Mammary epithelial cell (primary cell): ENCODE measurements at regions of chr9 and their contacts with region 1.

Region 1: DNA sequence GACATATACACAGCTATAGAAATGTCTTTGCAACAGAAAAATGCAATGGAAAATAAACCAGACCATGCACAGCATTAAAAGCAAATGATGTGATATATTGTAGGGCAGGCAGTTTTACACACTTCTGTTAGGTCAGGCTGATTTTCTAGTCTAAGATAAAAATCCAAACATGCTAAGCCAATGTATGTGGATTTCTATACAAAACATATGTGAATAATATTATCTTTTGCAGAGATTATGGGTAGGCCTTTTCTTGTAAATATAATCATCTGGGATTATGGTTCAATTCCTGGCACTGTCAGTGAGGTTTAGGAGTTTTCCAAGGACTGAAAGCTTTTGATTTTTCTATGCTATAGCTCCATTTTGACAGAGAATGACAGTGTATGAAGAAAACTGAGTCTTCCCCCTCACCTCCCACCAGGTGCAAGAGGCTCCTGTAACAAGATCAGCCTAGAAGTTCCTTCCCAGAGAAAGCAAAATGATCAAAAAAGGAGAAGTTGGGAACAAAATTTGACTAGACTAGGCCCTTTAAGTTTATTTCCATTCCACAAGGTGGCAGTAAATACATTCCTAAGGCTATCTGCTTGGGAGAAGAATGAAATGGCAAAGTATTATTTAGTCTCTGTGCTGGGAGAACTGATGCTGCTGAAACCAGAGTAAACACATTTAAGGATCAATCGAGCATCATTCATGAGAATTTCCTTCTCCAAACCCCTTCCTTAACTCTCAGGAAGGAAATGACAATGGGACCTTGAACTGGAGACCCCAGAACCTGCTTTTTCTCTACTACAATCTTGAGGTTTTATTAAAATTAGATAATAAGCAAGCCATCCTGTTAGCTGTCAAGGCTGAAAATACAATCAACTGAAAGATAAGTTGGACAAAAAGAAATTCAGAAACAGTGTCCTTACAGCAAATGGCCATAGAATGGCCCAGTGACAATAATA is 133.0 kb upstream of the TUT7 start:
- DNase-seq: peak; percentile 40
- H3K4me3 ChIP-seq: no peak overlapping the region
- H3K27ac ChIP-seq: no peak overlapping the region
- H3K4me1 ChIP-seq: peaks cover 8% of the 10 kb centered on the region
- H3K27me3 ChIP-seq: no peaks in the 10 kb centered on the region
- CTCF ChIP-seq: peak; percentile 31 to 69

Region 2: GRCh38 chr9:86413966-86414880 is 72.9 kb before region 1 on chr9:
- CTCF ChIA-PET with region 1: no interaction called
- dilution Hi-C with region 1: no loop called
- in situ Hi-C with region 1: no loop called
- intact Hi-C with region 1: loop called (anchors 5 kb)
- DNase-seq: no peak
- H3K4me3 ChIP-seq: no peak overlapping the region
- H3K27ac ChIP-seq: no peak overlapping the region
- H3K4me1 ChIP-seq: no peaks in the 10 kb centered on the region
- H3K27me3 ChIP-seq: no peaks in the 10 kb centered on the region
- CTCF ChIP-seq: peak; percentile 59 to 61

Region 3: DNA sequence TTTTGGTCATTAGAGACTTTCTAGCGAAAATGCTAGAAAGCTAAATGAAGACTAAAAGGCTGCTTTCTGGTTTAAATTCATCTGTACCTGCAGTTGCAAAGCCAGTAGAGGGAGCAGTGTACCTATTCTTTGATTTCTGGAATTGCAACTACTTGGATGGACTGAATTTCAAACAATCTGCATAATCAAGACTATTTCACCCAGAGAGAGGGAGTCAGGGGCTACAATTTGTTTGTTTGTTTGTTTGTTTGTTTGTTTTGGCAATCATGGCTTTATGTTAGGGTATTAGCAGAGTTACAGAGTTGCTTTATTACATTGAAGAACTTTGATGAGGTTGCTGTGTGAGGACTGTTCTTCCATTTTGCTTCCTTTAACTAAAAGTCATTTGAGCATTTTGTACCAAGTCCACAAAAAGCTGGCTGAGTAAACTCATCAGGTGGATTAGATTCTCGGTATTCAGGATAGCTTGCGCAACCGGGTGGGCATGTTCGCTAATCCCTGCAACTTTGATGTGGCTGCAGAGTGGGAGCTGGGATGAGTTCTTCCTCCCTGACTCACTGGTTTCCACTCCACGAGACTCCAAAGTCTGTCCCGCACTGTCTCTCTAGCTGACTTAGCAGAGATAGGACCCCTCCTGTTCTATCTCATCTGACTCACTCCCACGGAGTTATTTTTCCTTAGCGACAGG is 53.0 kb before region 1 on chr9:
- CTCF ChIA-PET with region 1: no interaction called
- dilution Hi-C with region 1: no loop called
- in situ Hi-C with region 1: loop called in 1 of 2 experiments (anchors 10 kb)
- intact Hi-C with region 1: loop called (anchors 2 kb)
- DNase-seq: peak; percentile 35
- H3K4me3 ChIP-seq: no peak overlapping the region
- H3K27ac ChIP-seq: no peak overlapping the region
- H3K4me1 ChIP-seq: peaks cover 8% of the 10 kb centered on the region
- H3K27me3 ChIP-seq: no peaks in the 10 kb centered on the region
- CTCF ChIP-seq: peak; percentile 82 to 84

Region 4: DNA sequence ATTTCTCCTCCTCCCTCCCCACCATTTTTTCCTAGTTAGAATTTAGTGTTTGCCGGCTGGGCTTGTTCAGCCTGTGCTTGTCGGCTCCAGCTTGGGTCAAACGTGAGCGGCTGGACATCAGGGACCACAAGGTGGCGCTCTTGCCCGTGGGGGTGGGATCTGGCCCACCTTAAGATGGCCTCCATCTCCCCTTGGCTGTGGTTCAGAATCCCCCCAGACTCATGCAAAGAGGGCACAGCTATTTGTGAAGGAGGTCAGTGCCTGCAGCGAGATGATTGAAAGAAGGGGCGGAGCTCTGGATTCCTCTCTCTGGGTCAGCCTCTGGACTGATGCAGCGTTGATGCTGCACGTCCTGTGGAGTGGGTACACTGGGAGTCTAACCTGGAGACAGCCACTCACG is 150.4 kb after region 1 on chr9:
- CTCF ChIA-PET with region 1: no interaction called
- dilution Hi-C with region 1: no loop called
- in situ Hi-C with region 1: no loop called
- intact Hi-C with region 1: loop called (anchors 1 kb)
- DNase-seq: no peak
- H3K4me3 ChIP-seq: no peak overlapping the region
- H3K27ac ChIP-seq: no peak overlapping the region
- H3K4me1 ChIP-seq: no peaks in the 10 kb centered on the region
- H3K27me3 ChIP-seq: no peaks in the 10 kb centered on the region
- CTCF ChIP-seq: peak; percentile 34 to 83

Region 5: GRCh38 chr9:87662808-87663528 is 1175.8 kb after region 1 on chr9:
- CTCF ChIA-PET with region 1: no interaction called
- dilution Hi-C with region 1: no loop called
- in situ Hi-C with region 1: no loop called
- intact Hi-C with region 1: loop called (anchors 5 kb)
- DNase-seq: peak; percentile 78
- H3K4me3 ChIP-seq: no peak overlapping the region
- H3K27ac ChIP-seq: no peak overlapping the region
- H3K4me1 ChIP-seq: no peaks in the 10 kb centered on the region
- H3K27me3 ChIP-seq: no peaks in the 10 kb centered on the region
- CTCF ChIP-seq: peak; percentile 84 to 92